ENCODE measurements at regions of chr14 and their contacts with region 1.

Region 1: GRCh38 chr14:61837336-61838229 is 75.4 kb downstream of the SNAPC1 start:
- DNase-seq: peak; percentile 84
- ATAC-seq: peak; percentile 97
- H3K4me3 ChIP-seq: no peak overlapping the region
- H3K4me3 Mint-ChIP-seq: no peak overlapping the region
- H3K27ac ChIP-seq: no peak overlapping the region
- H3K27ac Mint-ChIP-seq: no peak overlapping the region
- H3K4me1 ChIP-seq: peaks cover 0 to 7% of the 10 kb centered on the region in 2 donors
- H3K4me1 Mint-ChIP-seq: no peaks in the 10 kb centered on the region
- H3K27me3 ChIP-seq: no peaks in the 10 kb centered on the region
- H3K27me3 Mint-ChIP-seq: peaks cover 5% of the 10 kb centered on the region
- CTCF ChIP-seq: peak; percentile 93

Region 2: GRCh38 chr14:61269321-61270083 is 568.1 kb before region 1 on chr14:
- CTCF ChIA-PET with region 1: interaction called, 9 read pairs
- POLR2A ChIA-PET with region 1: no interaction called
- intact Hi-C with region 1: loop called (anchors 1 kb)
- DNase-seq: peak; percentile 73
- ATAC-seq: peak; percentile 86
- H3K4me3 ChIP-seq: peak overlapping the region in 2 of 5 experiments; percentile 27 to 28
- H3K4me3 Mint-ChIP-seq: peak overlapping the region; percentile 68
- H3K27ac ChIP-seq: no peak overlapping the region
- H3K27ac Mint-ChIP-seq: no peak overlapping the region
- H3K4me1 ChIP-seq: peaks cover 0 to 3% of the 10 kb centered on the region in 2 donors
- H3K4me1 Mint-ChIP-seq: peaks cover 3% of the 10 kb centered on the region
- H3K27me3 ChIP-seq: peaks cover 0 to 23% (median 12%) of the 10 kb centered on the region in 4 experiments
- H3K27me3 Mint-ChIP-seq: peaks cover 60% of the 10 kb centered on the region
- CTCF ChIP-seq: peak; percentile 89

Region 3: DNA sequence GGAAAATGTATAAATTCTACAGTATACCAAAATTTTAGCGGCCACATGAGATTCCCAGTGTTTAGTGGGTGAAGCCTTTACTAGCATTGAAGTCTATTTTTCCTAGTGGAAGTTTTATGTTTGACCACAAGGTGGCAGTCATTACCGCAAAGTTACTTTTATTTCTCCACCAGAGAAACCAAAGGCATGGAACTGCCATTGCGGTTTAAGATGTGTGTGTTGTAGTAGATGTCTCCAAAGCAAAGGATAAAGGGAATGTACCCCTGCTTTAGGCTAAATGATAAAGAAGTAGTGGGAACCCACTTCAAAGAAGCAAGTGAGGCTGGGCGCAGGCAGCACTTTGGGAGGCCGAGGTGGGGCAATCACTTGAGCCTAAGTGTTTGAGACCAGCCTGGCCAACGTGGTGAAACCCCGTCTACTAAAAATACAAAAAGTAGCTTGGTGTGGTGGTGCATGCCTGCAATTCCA is 375.7 kb before region 1 on chr14:
- CTCF ChIA-PET with region 1: interaction called, 287 read pairs
- POLR2A ChIA-PET with region 1: interaction called, 6 read pairs
- intact Hi-C with region 1: loop called (anchors 1 kb)
- DNase-seq: peak; percentile 80
- ATAC-seq: peak; percentile 70
- H3K4me3 ChIP-seq: no peak overlapping the region
- H3K4me3 Mint-ChIP-seq: peak overlapping the region; percentile 21
- H3K27ac ChIP-seq: no peak overlapping the region
- H3K27ac Mint-ChIP-seq: peak overlapping the region; percentile 74
- H3K4me1 ChIP-seq: peaks cover 8 to 18% of the 10 kb centered on the region in 2 donors
- H3K4me1 Mint-ChIP-seq: peaks cover 30% of the 10 kb centered on the region
- H3K27me3 ChIP-seq: no peaks in the 10 kb centered on the region
- H3K27me3 Mint-ChIP-seq: no peaks in the 10 kb centered on the region
- CTCF ChIP-seq: peak; percentile 94

Region 4: GRCh38 chr14:61719344-61720293 is 118.0 kb before region 1 on chr14:
- CTCF ChIA-PET with region 1: interaction called, 13 read pairs
- POLR2A ChIA-PET with region 1: no interaction called
- intact Hi-C with region 1: no loop called
- DNase-seq: peak; percentile 46
- ATAC-seq: peak; percentile 37
- H3K4me3 ChIP-seq: peak overlapping the region in 4 of 5 experiments; percentile 5 to 41 (median 24)
- H3K4me3 Mint-ChIP-seq: peak overlapping the region; percentile 82
- H3K27ac ChIP-seq: peak overlapping the region; percentile 78 to 88
- H3K27ac Mint-ChIP-seq: peak overlapping the region; percentile 80
- H3K4me1 ChIP-seq: peaks cover 44 to 59% of the 10 kb centered on the region in 2 donors
- H3K4me1 Mint-ChIP-seq: peaks cover 74% of the 10 kb centered on the region
- H3K27me3 ChIP-seq: no peaks in the 10 kb centered on the region
- H3K27me3 Mint-ChIP-seq: no peaks in the 10 kb centered on the region
- CTCF ChIP-seq: no peak

Region 5: DNA sequence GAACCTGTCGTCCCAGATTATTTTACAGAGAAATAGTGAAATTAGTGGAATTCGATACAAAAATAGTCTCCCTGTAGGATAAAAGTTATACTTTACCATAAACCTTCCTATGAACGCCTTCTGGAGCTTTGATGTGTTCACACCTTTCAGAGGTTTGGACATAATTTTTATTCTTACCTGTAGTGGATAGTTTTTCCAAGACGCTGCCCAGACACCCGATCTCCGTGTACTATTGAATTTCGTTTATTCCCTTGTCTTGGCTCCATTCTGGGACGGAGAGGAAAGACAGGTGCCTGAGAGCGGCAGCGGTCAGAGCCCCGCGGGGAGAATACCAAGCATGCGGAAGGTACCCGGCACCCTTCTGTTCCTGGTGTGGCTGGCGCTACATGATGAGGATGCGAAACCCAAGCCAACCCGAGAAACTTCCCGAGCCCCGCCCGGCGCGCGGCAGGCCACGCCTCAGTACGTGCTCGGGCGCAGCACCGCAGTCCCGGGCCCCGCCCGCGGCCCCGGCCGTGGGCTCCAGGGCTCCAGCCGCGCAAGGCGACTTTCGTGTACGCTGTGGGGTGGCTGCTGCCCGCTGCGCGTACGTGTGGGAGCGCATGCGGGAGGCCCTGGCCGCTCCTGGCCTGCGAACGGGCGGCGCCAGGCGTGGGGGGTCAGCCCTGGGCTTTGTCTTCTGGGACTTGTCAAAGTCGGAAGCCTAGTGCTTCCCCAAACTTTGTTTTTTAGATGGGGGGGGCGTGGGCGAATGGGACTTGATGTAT is 86.7 kb before region 1 on chr14:
- CTCF ChIA-PET with region 1: interaction called, 13 read pairs
- POLR2A ChIA-PET with region 1: no interaction called
- intact Hi-C with region 1: no loop called
- DNase-seq: peak; percentile 91
- ATAC-seq: peak; percentile 91
- H3K4me3 ChIP-seq: peak overlapping the region; percentile 47 to 71 (median 59)
- H3K4me3 Mint-ChIP-seq: peak overlapping the region; percentile 92
- H3K27ac ChIP-seq: peak overlapping the region; percentile 47 to 73
- H3K27ac Mint-ChIP-seq: peak overlapping the region; percentile 93
- H3K4me1 ChIP-seq: peaks cover 25 to 27% of the 10 kb centered on the region in 2 donors
- H3K4me1 Mint-ChIP-seq: peaks cover 42% of the 10 kb centered on the region
- H3K27me3 ChIP-seq: no peaks in the 10 kb centered on the region
- H3K27me3 Mint-ChIP-seq: no peaks in the 10 kb centered on the region
- CTCF ChIP-seq: no peak

Region 6: DNA sequence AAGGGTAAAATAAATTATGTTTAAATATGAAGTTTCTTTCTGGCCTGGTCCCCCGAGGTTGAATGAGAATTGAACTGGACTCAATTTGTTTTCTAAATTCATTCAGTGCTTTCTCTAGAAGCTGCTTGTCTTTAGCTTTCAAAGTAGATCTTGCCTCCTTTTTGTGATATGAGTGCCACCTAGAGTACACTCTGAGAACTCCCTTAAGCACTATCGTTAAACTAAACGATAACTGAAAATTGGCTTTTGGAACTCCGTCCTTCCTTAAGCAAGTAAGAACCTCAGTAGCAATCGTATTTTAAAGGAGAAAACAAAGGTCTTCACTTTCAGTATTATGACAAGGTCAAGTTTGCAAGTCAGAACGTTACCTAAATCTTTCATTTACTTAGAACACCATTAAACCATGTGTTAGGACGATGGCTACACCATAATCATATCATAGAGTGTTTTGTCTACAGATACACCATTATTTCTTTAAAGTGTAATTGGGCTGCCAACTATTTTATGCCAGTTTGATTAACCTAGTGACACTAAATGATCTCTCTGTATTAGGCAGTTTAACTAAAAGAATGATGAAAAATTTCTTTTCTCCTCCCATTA is 289.4 kb after region 1 on chr14:
- CTCF ChIA-PET with region 1: interaction called, 68 read pairs
- POLR2A ChIA-PET with region 1: no interaction called
- intact Hi-C with region 1: loop called (anchors 1 kb)
- DNase-seq: peak; percentile 79
- ATAC-seq: peak; percentile 73
- H3K4me3 ChIP-seq: no peak overlapping the region
- H3K4me3 Mint-ChIP-seq: no peak overlapping the region
- H3K27ac ChIP-seq: no peak overlapping the region
- H3K27ac Mint-ChIP-seq: no peak overlapping the region
- H3K4me1 ChIP-seq: peaks cover 9 to 14% of the 10 kb centered on the region in 2 donors
- H3K4me1 Mint-ChIP-seq: peaks cover 37% of the 10 kb centered on the region
- H3K27me3 ChIP-seq: no peaks in the 10 kb centered on the region
- H3K27me3 Mint-ChIP-seq: no peaks in the 10 kb centered on the region
- CTCF ChIP-seq: peak; percentile 95

Measured in B cell (primary cell).